ENCODE measurements at regions of chr5 and their contacts with region 1.

Region 1: GRCh38 chr5:148952097-148952867 is 110.6 kb downstream of the SH3TC2 start:
- DNase-seq: no peak
- ATAC-seq: no peak
- H3K4me3 ChIP-seq: no peak overlapping the region
- H3K4me3 Mint-ChIP-seq: no peak overlapping the region
- H3K27ac ChIP-seq: no peak overlapping the region
- H3K27ac Mint-ChIP-seq: no peak overlapping the region
- H3K4me1 ChIP-seq: peaks cover 4 to 5% of the 10 kb centered on the region in 2 donors
- H3K4me1 Mint-ChIP-seq: peaks cover 3% of the 10 kb centered on the region
- H3K27me3 ChIP-seq: no peaks in the 10 kb centered on the region
- H3K27me3 Mint-ChIP-seq: no peaks in the 10 kb centered on the region
- CTCF ChIP-seq: no peak

Region 2: DNA sequence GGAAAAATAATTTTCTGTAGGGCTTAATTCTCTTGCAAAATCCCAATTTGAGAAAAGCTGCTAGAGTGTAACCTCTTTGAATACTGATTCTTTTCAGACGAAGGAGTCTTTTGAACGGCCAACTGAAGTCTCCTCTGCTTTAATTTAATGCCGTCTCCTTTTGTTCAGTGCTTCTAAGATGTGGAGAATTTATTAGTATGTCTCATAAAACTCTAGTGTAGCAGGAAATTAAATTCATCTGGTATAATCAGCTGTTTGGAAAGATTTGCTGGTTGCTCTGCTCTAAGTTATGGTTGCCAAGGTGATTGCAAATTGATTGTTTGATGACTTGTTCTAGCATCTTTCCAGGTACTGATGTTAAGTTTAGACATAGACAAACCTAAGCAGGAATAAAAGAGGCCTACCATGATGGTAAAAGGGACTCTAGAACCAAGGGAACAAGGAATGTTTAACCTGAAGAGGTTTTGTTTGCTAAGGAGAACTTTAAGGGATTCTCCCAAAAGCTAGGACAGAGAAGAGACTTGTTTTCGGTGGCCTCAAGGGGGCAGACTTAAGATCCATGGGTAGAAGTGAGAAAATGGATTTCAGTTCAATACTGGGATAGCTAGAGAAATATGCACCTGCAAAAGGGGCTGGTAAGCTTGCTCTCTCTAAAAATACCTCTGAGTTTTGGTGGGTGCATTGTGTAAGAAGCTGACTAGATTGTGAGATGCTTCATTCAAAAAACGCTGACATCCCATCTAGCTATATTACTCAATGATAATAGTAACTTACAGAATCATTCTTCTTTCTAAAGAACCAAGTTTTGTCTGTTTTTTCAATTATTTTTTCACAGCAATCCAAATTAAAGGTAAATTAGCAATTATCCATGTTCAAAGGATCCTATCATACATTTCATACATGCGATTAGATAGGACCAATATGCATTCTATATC is 131.6 kb before region 1 on chr5:
- CTCF ChIA-PET with region 1: interaction called, 44 read pairs
- POLR2A ChIA-PET with region 1: no interaction called
- intact Hi-C with region 1: loop called (anchors 1 kb)
- DNase-seq: peak; percentile 41
- ATAC-seq: no peak
- H3K4me3 ChIP-seq: no peak overlapping the region
- H3K4me3 Mint-ChIP-seq: no peak overlapping the region
- H3K27ac ChIP-seq: no peak overlapping the region
- H3K27ac Mint-ChIP-seq: no peak overlapping the region
- H3K4me1 ChIP-seq: peaks cover 33 to 35% of the 10 kb centered on the region in 2 donors
- H3K4me1 Mint-ChIP-seq: peaks cover 60% of the 10 kb centered on the region
- H3K27me3 ChIP-seq: no peaks in the 10 kb centered on the region
- H3K27me3 Mint-ChIP-seq: no peaks in the 10 kb centered on the region
- CTCF ChIP-seq: peak; percentile 67

Measured in B cell (primary cell).